HepG2 (cell line): ENCODE measurements at regions of chr7 and their contacts with region 1.

Region 1: GRCh38 chr7:87463982-87464381 is 11.5 kb downstream of the ABCB4 start:
- DNase-seq: peak; percentile 84
- ATAC-seq: peak; percentile 88
- H3K4me3 ChIP-seq: peak overlapping the region in 2 of 3 experiments; percentile 7 to 51; a peak in 3 of 6 replicates
- H3K27ac ChIP-seq: peak overlapping the region; percentile 87
- H3K4me1 ChIP-seq: peaks cover 37% of the 10 kb centered on the region
- H3K27me3 ChIP-seq: no peaks in the 10 kb centered on the region
- CTCF ChIP-seq: no peak
- EP300 ChIP-seq: peak; percentile 76 to 89; a peak in 3 of 4 replicates
- POLR2A ChIP-seq: no peak
- RAD21 ChIP-seq: no peak

Region 2: DNA sequence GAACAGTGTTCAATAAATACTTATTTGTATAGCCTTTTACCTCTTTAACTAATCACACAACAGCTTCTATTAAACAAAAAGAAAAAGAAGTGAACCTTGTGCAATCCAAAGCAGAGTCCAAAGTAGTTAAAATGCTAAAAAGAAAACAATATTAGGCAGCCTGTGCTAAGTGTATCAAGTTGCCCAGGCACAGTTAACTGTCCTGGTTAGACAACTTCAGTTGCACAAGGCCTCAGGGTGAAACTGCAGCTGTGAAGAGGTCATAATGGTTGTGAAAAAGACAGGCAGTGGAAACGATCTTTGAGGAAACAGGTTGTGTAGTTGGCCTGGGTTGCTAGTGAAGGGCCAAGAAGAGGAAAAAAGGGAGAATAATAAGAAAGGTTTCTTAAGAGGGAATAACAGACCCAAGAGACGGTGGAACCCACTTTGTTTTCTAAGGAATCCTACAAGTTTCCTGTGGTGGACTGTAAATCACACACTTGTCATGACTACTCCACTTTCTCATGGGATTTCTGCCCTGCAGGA is 124.5 kb before region 1 on chr7:
- CTCF ChIA-PET with region 1: no interaction called
- POLR2A ChIA-PET with region 1: no interaction called
- in situ Hi-C with region 1: no loop called
- intact Hi-C with region 1: no loop called
- DNase-seq: no peak
- ATAC-seq: peak; percentile 99
- H3K4me3 ChIP-seq: no peak overlapping the region
- H3K27ac ChIP-seq: peak overlapping the region; percentile 65
- H3K4me1 ChIP-seq: peaks cover 36% of the 10 kb centered on the region
- H3K27me3 ChIP-seq: no peaks in the 10 kb centered on the region
- CTCF ChIP-seq: no peak
- EP300 ChIP-seq: no peak
- POLR2A ChIP-seq: no peak
- RAD21 ChIP-seq: no peak

Region 3: DNA sequence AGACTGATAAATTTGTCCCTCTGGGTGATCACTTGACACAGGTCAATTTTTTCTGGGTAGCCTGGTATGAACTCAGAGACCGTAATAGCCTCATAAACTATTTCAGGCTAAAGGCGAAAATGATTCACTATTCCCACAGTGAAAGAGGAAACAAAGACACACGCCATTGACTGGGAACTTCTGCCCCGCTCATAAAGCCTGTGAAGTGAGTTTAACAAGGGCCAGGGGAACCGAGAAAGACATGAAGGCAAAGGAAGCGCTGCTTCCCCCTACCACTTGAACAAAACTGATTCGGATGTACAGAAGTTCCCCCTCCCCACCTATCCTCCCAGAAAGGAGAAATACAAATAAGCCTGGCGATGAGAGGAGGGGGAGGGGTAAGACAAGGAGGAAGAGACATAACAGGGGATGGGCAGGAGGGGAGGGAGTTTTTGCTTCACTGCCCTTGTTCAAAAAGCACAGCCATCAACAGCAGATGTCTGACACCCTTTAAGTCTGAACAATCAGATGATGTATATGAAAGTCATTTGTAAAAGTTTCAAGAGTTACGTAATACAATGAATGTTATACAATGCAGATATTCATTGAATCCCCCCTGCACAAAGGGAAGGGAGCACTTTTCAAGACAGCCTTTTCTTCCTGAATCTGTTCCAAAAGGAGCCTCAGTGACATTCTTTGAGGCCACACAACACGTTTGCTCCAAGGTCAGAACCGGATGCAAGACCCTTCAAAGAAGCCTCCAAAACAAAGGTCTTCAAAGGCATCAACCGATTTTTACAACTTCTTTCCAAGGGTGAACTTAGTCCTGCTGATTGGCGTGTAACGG is 10.8 kb after region 1 on chr7:
- CTCF ChIA-PET with region 1: no interaction called
- POLR2A ChIA-PET with region 1: interaction called, 19 read pairs
- in situ Hi-C with region 1: no loop called
- intact Hi-C with region 1: loop called (anchors 1 kb)
- DNase-seq: no peak
- ATAC-seq: peak; percentile 16; the same call in 2 of the 3 replicates
- H3K4me3 ChIP-seq: peak overlapping the region; percentile 70 to 81 (median 74)
- H3K27ac ChIP-seq: peak overlapping the region; percentile 74
- H3K4me1 ChIP-seq: peaks cover 62% of the 10 kb centered on the region
- H3K27me3 ChIP-seq: no peaks in the 10 kb centered on the region; a peak in 1 of 5 replicates
- CTCF ChIP-seq: no peak
- EP300 ChIP-seq: no peak
- POLR2A ChIP-seq: no peak
- RAD21 ChIP-seq: no peak

Region 4: GRCh38 chr7:87498893-87499292 is 34.9 kb after region 1 on chr7:
- CTCF ChIA-PET with region 1: no interaction called
- POLR2A ChIA-PET with region 1: interaction called, 16 read pairs
- in situ Hi-C with region 1: no loop called
- intact Hi-C with region 1: loop called (anchors 5 kb)
- DNase-seq: no peak
- ATAC-seq: no peak
- H3K4me3 ChIP-seq: no peak overlapping the region
- H3K27ac ChIP-seq: no peak overlapping the region
- H3K4me1 ChIP-seq: peaks cover 31% of the 10 kb centered on the region
- H3K27me3 ChIP-seq: no peaks in the 10 kb centered on the region
- CTCF ChIP-seq: no peak
- EP300 ChIP-seq: no peak
- POLR2A ChIP-seq: no peak
- RAD21 ChIP-seq: no peak